ENCODE measurements at regions of chr13 and their contacts with region 1.

Region 1: GRCh38 chr13:44577236-44578066 is 1.3 kb upstream of the TSC22D1 start:
- DNase-seq: peak; percentile 97 to 98
- ATAC-seq: peak; percentile 91 to 97 (median 94)
- H3K4me3 ChIP-seq: peak overlapping the region; percentile 68 to 98 (median 94)
- H3K27ac ChIP-seq: peak overlapping the region; percentile 86 to 98 (median 97)
- H3K4me1 ChIP-seq: peaks cover 4 to 44% (median 38%) of the 10 kb centered on the region in 9 donors
- H3K27me3 ChIP-seq: no peaks in the 10 kb centered on the region
- CTCF ChIP-seq: no peak

Region 2: DNA sequence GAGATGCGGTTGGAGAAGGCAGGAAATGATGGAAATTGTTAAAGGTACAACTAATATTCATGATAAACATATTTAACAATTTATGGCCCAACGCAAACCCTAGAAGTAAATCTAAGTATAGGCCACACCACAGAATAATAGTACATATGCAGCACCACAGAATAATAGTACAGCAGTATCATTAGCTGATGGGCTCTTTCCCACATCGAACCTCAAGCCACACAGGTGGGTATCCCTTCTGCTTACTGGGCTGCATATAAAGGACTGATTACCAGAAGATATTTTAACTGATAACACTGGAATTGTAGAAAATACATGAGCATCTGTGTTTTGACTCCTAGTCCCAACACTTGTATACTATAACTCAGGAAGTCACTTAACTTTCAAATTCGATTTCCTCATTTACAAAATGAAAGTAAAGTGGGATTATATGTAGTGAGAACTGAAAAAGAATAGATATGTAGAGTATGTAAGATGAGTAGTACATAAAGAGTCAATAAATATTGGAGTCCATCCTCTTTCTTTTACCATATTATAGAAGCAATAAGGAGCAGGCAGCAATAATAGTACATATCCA is 92.8 kb before region 1 on chr13:
- intact Hi-C with region 1: loop called in 3 of 10 experiments (anchors 5 to 10 kb)
- DNase-seq: no peak
- ATAC-seq: peak in 2 of 8 donors; percentile 25 to 34
- H3K4me3 ChIP-seq: peak overlapping the region in 5 of 10 donors; percentile 1 to 23 (median 11)
- H3K27ac ChIP-seq: peak overlapping the region in 1 of 10 donors; percentile 60
- H3K4me1 ChIP-seq: peaks cover 0 to 20% (median 8%) of the 10 kb centered on the region in 9 donors
- H3K27me3 ChIP-seq: no peaks in the 10 kb centered on the region
- CTCF ChIP-seq: no peak

Region 3: DNA sequence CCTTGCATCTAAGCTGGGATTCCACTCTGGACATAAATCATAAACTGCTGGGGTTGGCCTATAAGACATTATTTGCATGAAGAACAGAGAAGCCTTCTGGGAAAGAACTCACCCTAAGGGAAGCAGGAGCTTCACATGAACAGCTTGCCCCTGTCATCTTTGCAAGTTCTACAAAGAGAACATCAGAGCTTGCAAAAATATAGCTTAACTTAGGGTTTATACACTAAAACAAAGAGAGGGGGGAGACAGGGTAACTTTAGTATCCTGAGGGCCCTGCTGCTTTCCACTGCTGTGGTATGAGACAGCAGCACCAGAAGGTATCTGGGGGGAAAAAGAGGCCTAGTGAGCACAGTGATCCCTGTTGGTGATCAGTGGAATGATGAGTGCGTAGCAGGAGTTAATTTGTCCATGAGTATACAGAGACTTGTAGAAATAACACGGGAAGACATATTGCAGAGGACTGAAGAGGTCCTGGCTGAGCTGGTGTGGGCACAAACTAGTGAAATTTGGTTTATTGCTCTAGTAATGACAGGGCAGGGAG is 114.8 kb after region 1 on chr13:
- intact Hi-C with region 1: loop called in 1 of 10 experiments (anchors 5 kb)
- DNase-seq: no peak
- ATAC-seq: no peak
- H3K4me3 ChIP-seq: no peak overlapping the region
- H3K27ac ChIP-seq: peak overlapping the region in 9 of 10 donors; percentile 12 to 82 (median 69)
- H3K4me1 ChIP-seq: peaks cover 0 to 47% (median 5%) of the 10 kb centered on the region in 9 donors
- H3K27me3 ChIP-seq: no peaks in the 10 kb centered on the region
- CTCF ChIP-seq: no peak

Region 4: DNA sequence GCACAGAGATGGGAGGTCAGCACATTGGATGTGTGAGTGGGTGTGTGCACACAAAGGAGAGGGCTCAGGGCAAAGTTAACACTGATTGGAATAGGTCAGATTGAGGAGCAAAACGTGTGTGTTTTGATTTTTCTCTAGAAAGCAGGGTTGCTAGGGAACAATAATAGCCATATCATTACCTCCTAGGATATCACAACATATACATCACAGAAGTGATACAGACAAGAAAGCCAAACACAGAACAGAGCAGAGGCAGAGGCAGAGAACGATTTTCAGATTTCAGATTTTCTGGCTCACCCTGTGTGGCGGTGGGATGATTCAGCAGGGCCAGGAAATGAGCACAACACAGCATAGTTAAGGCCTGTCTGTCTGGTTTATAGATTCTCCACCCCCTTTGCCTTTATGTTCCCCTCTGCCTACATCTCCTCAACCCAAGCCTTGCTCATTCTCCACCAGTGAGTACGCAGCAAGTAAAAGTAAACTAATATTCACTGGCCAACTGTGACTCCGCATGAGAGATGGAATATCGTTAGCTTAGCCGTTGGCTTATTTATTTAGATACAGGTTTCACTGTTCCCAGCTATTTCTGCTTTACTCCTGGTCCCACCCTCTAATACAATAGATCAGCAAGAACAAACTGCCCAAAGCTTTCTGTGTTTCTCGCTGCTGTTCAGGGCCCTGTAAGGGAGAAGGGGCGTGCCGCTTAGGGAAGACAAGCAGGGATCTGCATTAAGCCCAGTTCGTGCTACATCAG is 181.4 kb after region 1 on chr13:
- intact Hi-C with region 1: loop called in 1 of 10 experiments (anchors 10 kb)
- DNase-seq: no peak
- ATAC-seq: peak in 1 of 8 donors; percentile 26
- H3K4me3 ChIP-seq: no peak overlapping the region
- H3K27ac ChIP-seq: no peak overlapping the region
- H3K4me1 ChIP-seq: peaks cover 0 to 25% (median 12%) of the 10 kb centered on the region in 9 donors
- H3K27me3 ChIP-seq: no peaks in the 10 kb centered on the region
- CTCF ChIP-seq: no peak

Region 5: GRCh38 chr13:44879463-44880058 is 302.1 kb after region 1 on chr13:
- intact Hi-C with region 1: loop called in 2 of 10 experiments (anchors 10 kb)
- DNase-seq: no peak
- ATAC-seq: peak in 1 of 8 donors; percentile 43
- H3K4me3 ChIP-seq: no peak overlapping the region
- H3K27ac ChIP-seq: no peak overlapping the region
- H3K4me1 ChIP-seq: no peaks in the 10 kb centered on the region
- H3K27me3 ChIP-seq: no peaks in the 10 kb centered on the region
- CTCF ChIP-seq: peak; percentile 18 to 60 (median 42)

Region 6: DNA sequence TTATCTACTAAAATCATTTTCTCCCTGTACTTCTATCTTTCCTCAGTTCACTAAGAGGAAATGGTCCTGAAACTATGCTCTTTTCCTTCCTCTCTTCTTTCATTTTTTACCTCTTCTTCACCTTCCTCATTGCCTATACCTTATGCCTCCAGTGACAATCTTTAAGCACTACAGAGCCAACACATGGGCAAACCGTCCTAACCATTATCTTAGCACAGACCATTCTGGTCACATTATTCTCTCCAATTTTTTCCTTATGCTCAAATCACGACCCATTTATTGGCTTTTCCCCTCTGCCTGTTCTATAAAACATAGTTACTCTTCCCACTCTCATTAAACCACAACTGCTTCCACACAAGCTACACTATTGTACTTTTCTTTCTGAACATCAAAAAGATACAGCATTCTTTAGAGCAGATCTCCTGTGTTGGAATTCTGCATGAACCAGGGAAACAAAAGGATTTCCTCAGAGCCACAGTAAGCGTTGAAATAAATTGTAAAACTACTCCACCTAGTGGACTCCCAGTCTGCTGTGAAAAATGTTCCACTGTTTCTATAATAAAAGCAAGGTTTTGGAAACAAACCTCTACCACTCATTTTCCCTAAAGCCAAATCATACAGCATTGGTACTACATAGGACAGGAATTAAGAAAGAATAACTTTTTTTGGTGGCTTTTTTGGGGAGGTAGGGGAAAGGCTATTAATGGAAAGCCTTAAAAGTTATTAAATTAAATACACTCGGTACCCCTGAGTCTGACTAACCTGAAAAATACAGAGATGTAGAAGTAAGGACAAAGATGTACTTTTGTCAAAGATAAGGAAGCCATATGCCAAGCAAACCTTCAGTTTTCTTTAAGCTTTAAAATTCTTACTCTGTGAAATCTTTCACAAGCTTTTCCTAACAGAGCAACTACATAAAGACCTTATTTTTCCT is 392.4 kb after region 1 on chr13:
- intact Hi-C with region 1: loop called in 3 of 10 experiments (anchors 5 to 10 kb)
- DNase-seq: peak in 1 of 2 donors; percentile 22
- ATAC-seq: peak in 6 of 8 donors; percentile 56 to 79 (median 72)
- H3K4me3 ChIP-seq: no peak overlapping the region
- H3K27ac ChIP-seq: no peak overlapping the region
- H3K4me1 ChIP-seq: peaks cover 0 to 29% (median 7%) of the 10 kb centered on the region in 9 donors
- H3K27me3 ChIP-seq: no peaks in the 10 kb centered on the region
- CTCF ChIP-seq: peak; percentile 62 to 89 (median 81)